ENCODE measurements at regions of chr1 and their contacts with region 1.

Region 1: GRCh38 chr1:118442214-118442613 is 257.2 kb upstream of the SPAG17 start:
- DNase-seq: no peak
- H3K4me3 ChIP-seq: no peak overlapping the region
- H3K27ac ChIP-seq: no peak overlapping the region
- H3K4me1 ChIP-seq: no peaks in the 10 kb centered on the region
- H3K27me3 ChIP-seq: peaks cover 6% of the 10 kb centered on the region
- CTCF ChIP-seq: no peak

Region 2: GRCh38 chr1:118767971-118768370 is 325.8 kb after region 1 on chr1:
- CTCF ChIA-PET with region 1: no interaction called
- dilution Hi-C with region 1: loop called (anchors 10 kb)
- in situ Hi-C with region 1: no loop called
- intact Hi-C with region 1: no loop called
- DNase-seq: no peak
- H3K4me3 ChIP-seq: no peak overlapping the region
- H3K27ac ChIP-seq: no peak overlapping the region
- H3K4me1 ChIP-seq: no peaks in the 10 kb centered on the region
- H3K27me3 ChIP-seq: peaks cover 2% of the 10 kb centered on the region
- CTCF ChIP-seq: no peak

Region 3: GRCh38 chr1:118973531-118974137 is 531.4 kb after region 1 on chr1:
- CTCF ChIA-PET with region 1: no interaction called
- dilution Hi-C with region 1: no loop called
- in situ Hi-C with region 1: no loop called
- intact Hi-C with region 1: no loop called
- DNase-seq: no peak
- H3K4me3 ChIP-seq: no peak overlapping the region
- H3K27ac ChIP-seq: no peak overlapping the region
- H3K4me1 ChIP-seq: no peaks in the 10 kb centered on the region
- H3K27me3 ChIP-seq: peaks cover 9% of the 10 kb centered on the region
- CTCF ChIP-seq: no peak

Measured in mammary epithelial cell (primary cell).